ENCODE measurements at regions of chr11 and their contacts with region 1.

Region 1: GRCh38 chr11:107439586-107440167 is 17.9 kb downstream of the CWF19L2 start:
- DNase-seq: no peak
- H3K4me3 ChIP-seq: no peak overlapping the region
- H3K27ac ChIP-seq: no peak overlapping the region
- H3K4me1 ChIP-seq: no peaks in the 10 kb centered on the region
- H3K27me3 ChIP-seq: no peaks in the 10 kb centered on the region
- CTCF ChIP-seq: no peak
- EP300 ChIP-seq: no peak
- POLR2A ChIP-seq: no peak

Region 2: GRCh38 chr11:108206969-108207682 is 767.4 kb after region 1 on chr11:
- intact Hi-C with region 1: loop called (anchors 5 kb)
- DNase-seq: no peak
- H3K4me3 ChIP-seq: no peak overlapping the region
- H3K27ac ChIP-seq: no peak overlapping the region
- H3K4me1 ChIP-seq: no peaks in the 10 kb centered on the region
- H3K27me3 ChIP-seq: no peaks in the 10 kb centered on the region
- CTCF ChIP-seq: no peak
- EP300 ChIP-seq: no peak
- POLR2A ChIP-seq: no peak